Activated T-helper 2 cell treated with anti-CD3 and anti-CD28 coated beads, Interferon-gamma antibody, Interleukin-2, Interleukin-4, amounts not matched to agents 10 μg/mL and 5 μg/mL and 100 μg/mL, durations not matched to agents 14 hours and 24 hours and 36 hours (primary cell): ENCODE measurements at regions of chr1 and their contacts with region 1.

Region 1: DNA sequence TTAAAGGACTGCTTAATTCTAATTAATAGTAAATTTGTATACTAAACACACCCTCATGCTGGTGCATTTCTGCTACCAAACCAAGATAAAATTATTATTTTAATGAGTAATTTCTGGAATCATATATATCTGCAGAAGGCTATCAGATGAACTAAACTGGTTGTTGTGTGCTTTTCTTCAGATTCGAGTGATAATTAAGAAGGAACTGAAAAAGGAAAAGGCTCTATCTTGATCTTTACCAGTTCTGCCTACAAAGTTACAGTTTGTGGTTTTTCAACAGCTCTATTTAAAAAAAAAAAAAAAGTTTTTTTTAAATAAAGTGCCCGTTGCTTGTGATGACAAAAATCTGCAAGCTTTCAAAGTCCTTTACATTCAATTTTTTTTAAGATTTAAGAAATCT is 13.7 kb downstream of the DENND1B start:
- DNase-seq: no peak
- H3K4me3 Mint-ChIP-seq: no peak overlapping the region
- H3K27ac Mint-ChIP-seq: no peak overlapping the region
- H3K4me1 Mint-ChIP-seq: peaks cover 57% of the 10 kb centered on the region
- H3K27me3 Mint-ChIP-seq: no peaks in the 10 kb centered on the region

Region 2: DNA sequence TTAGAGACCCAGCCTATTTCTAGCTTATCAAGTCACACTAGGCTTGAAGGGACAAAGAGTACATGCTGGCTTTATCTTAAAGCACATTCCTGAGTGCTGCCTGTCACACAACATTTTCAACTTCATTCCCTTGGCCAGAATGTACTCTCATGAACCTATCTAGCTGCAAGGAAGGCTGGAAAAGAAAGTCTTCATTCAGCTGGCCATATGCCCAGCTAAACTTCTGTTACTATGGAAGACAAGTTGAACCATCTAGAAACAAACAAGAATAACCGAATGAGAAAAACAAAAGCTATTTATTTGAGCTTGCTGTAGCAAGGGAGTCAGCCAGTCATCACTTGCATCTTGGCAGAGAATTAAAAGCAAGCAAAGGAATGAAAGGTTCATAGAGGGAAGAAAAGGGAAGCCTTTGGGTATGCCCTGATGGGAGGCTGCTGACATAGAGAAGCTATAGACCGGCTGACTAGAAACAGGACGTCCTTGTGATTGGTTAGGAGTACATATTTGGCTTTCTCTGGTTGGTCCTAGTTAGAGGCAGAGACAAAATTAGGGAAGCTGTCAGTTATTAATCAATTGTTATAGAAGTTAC is 503.5 kb after region 1 on chr1:
- intact Hi-C with region 1: loop called (anchors 10 kb)
- DNase-seq: no peak
- H3K4me3 Mint-ChIP-seq: no peak overlapping the region
- H3K27ac Mint-ChIP-seq: no peak overlapping the region
- H3K4me1 Mint-ChIP-seq: peaks cover 30% of the 10 kb centered on the region
- H3K27me3 Mint-ChIP-seq: no peaks in the 10 kb centered on the region